Endothelial cell of umbilical vein (primary cell): ENCODE measurements at regions of chr4 and their contacts with region 1.

Region 1: DNA sequence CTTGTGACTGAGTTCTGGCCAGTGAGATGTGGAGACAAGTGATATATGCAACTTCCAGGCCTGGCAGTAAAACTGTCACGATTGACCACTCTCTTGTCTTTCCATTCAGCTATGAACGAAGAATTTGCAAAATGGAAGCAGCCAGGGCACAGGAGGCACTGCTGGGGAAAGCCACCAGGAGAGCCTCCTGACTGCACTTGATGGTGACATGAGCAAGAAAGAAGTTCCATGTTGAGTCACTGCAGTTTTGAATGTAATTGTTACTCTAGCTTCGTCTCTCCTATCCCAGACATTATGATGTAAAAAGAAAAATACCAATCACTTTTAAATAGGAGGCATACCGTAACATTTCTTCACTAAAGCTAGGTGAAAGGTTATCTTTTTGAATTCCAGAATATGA is 32.4 kb upstream of the ZCCHC4 start:
- DNase-seq: no peak
- H3K4me3 ChIP-seq: no peak overlapping the region
- H3K27ac ChIP-seq: no peak overlapping the region
- H3K4me1 ChIP-seq: no peaks in the 10 kb centered on the region
- H3K27me3 ChIP-seq: no peaks in the 10 kb centered on the region
- CTCF ChIP-seq: no peak
- POLR2A ChIP-seq: no peak

Region 2: DNA sequence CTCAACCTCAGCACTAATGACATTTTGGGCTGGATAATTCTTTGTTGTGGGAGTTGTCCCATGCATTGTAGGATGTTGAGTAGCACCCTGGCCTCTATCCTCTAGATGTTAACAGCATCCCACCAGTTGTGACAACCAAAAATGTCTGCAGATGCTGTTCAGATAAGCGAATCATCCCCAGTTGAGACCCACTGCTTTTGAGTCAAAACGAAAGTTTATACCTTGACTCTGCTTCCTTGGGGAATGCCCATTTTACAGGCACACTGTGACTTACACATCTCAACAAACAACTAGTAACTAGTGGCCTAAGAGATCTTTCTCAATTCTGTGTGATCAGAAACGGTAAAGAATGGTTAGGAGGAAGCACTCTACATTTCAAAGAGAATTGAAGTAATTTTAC is 157.0 kb before region 1 on chr4:
- CTCF ChIA-PET with region 1: no interaction called
- POLR2A ChIA-PET with region 1: no interaction called
- dilution Hi-C with region 1: no loop called
- intact Hi-C with region 1: no loop called
- DNase-seq: no peak
- H3K4me3 ChIP-seq: no peak overlapping the region
- H3K27ac ChIP-seq: no peak overlapping the region
- H3K4me1 ChIP-seq: no peaks in the 10 kb centered on the region
- H3K27me3 ChIP-seq: no peaks in the 10 kb centered on the region
- CTCF ChIP-seq: no peak
- POLR2A ChIP-seq: no peak

Region 3: DNA sequence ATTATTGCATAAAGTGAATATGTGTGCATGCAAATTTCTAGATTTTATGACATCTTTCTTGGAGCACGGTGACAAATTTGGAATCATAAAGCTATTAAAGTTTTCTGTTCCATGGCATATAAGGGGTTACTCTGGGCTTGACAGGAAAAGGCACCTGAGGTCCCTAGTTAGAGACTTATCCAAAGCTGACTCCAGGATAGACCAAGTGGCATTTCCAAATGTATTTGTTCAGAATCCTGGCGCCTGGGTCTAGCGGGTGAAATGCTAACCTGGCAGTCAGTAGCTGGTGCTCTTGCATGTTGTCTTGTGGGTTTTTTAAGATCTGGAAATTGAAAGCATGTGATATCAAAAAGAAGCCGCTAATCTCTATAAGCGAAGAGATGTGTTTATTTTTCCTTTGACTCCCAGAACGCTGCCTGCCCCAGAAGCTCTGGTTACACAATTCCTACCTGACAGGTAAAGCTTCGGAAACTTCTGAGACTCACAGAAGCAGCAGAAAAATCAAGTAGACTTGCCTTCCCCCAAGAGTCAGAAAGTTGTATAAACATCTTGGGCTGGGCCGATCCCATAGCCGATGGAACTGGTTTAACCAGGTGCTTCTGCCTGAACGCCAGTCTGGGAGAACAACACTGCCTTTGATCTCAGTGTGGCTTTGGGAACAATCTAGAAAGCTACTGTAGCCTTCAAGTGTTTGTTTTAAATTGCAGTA is 19.4 kb after region 1 on chr4:
- CTCF ChIA-PET with region 1: no interaction called
- POLR2A ChIA-PET with region 1: no interaction called
- dilution Hi-C with region 1: no loop called
- intact Hi-C with region 1: loop called (anchors 2 kb)
- DNase-seq: no peak
- H3K4me3 ChIP-seq: no peak overlapping the region
- H3K27ac ChIP-seq: no peak overlapping the region
- H3K4me1 ChIP-seq: no peaks in the 10 kb centered on the region
- H3K27me3 ChIP-seq: peaks cover 4 to 15% of the 10 kb centered on the region in 2 experiments
- CTCF ChIP-seq: no peak
- POLR2A ChIP-seq: no peak

Region 4: DNA sequence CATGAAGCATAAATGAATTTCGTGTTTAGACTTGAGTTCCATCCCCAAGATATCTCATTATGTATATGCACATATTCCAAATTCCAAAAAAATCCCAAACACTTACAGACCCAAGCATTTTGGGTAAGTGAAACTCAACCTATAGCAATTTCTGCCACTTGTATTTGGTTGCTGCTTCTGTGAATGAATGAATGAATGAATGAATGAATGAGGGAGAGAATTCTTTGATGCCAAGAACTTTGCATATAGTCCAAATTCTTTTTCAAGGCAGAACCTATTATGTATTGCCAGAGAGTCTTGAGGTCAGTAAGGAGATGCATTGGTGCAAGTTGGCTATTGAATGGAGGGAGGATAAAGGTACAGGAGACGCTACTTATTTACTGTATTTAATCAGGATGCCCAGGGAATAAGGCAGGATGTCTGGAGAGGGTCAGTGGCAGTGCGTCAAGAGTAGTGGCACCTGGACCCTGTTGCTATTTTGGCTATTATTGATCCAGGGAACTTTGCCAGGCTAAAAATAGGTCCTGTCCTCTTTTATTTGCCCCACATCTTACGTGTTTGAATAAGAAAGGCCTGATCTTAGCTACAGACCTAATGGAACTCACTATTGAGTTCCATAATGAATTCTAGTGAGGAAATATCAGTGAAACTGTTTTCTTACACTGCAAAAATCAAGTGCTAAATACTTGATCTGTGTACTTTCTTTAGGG is 130.8 kb after region 1 on chr4:
- CTCF ChIA-PET with region 1: no interaction called
- POLR2A ChIA-PET with region 1: no interaction called
- dilution Hi-C with region 1: no loop called
- intact Hi-C with region 1: no loop called
- DNase-seq: no peak
- H3K4me3 ChIP-seq: no peak overlapping the region
- H3K27ac ChIP-seq: no peak overlapping the region
- H3K4me1 ChIP-seq: no peaks in the 10 kb centered on the region
- H3K27me3 ChIP-seq: no peaks in the 10 kb centered on the region
- CTCF ChIP-seq: no peak
- POLR2A ChIP-seq: no peak